ENCODE measurements at regions of chr1 and their contacts with region 1.

Region 1: GRCh38 chr1:1059494-1060280 is 14.4 kb downstream of the RNF223 start:
- DNase-seq: peak; percentile 92 to 98 (median 97)
- ATAC-seq: peak; percentile 94
- H3K4me3 ChIP-seq: no peak overlapping the region
- H3K4me1 ChIP-seq: peaks cover 28% of the 10 kb centered on the region
- CTCF ChIP-seq: no peak

Region 2: GRCh38 chr1:861714-862113 is 198.0 kb before region 1 on chr1:
- intact Hi-C with region 1: no loop called
- DNase-seq: no peak
- ATAC-seq: no peak
- H3K4me3 ChIP-seq: no peak overlapping the region
- H3K4me1 ChIP-seq: peaks cover 2% of the 10 kb centered on the region
- CTCF ChIP-seq: no peak

Region 3: DNA sequence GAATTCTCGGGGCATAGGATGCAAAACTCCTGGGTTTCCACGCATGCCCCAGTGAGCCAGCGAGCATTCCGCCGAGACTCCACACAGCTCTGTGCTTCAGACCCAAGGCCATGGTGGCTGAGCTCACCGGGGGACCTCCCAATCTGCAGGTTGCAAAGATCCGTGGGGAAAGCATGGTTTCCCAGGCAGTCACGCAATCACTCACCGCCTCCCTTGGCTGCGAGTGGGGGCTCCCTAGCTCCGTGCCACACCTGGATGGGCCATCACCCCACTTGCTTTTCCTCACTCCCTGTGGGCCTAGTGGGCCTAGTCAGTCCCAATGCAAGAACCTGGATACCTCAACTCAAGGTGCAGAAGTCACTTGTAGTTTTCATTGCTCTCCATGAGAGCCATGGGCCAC is 172.9 kb before region 1 on chr1:
- intact Hi-C with region 1: no loop called
- DNase-seq: no peak
- ATAC-seq: no peak
- H3K4me3 ChIP-seq: no peak overlapping the region
- H3K4me1 ChIP-seq: no peaks in the 10 kb centered on the region
- CTCF ChIP-seq: no peak

Region 4: GRCh38 chr1:983799-984473 is 75.8 kb before region 1 on chr1:
- intact Hi-C with region 1: loop called (anchors 5 to 10 kb)
- DNase-seq: peak; percentile 59 to 65 (median 63)
- ATAC-seq: peak; percentile 73
- H3K4me3 ChIP-seq: no peak overlapping the region
- H3K4me1 ChIP-seq: no peaks in the 10 kb centered on the region
- CTCF ChIP-seq: peak; percentile 86

Region 5: GRCh38 chr1:1196431-1197187 is 136.9 kb after region 1 on chr1:
- intact Hi-C with region 1: no loop called
- DNase-seq: peak in 1 of 3 donors; percentile 17
- ATAC-seq: no peak
- H3K4me3 ChIP-seq: no peak overlapping the region
- H3K4me1 ChIP-seq: peaks cover 3% of the 10 kb centered on the region
- CTCF ChIP-seq: no peak

Measured in mucosa of descending colon (tissue), 3 donors.